CD8-positive, alpha-beta T cell (primary cell): ENCODE measurements at regions of chr7 and their contacts with region 1.

Region 1: DNA sequence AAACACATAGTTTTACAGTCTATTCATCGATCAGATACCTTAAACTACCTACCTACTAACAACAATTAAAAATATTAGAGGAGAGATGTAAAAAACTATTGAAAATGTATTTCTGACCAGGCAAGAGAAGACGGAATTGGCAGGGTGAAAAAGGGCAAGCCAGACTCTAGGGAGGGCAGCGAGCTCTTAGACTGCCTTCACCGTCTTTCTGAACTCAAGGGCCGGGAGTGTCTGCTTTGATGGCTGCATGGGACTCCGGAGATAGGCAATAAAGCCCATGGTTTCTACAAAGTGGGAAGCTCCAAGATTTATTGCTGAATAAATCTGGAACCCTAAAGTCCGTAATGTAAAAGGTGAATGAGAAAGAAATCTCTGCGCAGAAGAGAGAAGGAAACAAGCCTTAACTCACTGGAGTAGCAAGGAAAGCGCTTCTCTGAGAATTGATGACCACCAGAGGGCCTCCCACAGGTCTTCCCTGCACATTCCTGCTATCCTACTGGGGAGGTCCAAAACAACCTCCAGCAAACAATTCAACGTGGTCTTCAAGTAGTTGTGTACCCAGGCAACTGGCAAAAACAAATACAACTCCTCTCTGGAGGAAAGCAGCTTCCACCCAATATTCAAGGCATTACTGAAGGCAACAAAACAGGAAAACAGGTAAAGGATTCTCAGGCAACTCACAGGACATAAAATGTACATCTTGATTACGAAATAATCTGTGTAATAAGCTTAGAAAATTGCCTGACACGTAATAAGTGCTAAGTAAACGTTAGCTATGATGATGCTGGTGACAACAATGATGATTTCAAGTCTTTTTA is 181.3 kb downstream of the SDK1 start:
- DNase-seq: peak in 1 of 9 experiments; percentile 10
- ATAC-seq: no peak
- H3K4me3 ChIP-seq: no peak overlapping the region
- H3K4me3 Mint-ChIP-seq: no peak overlapping the region
- H3K27ac ChIP-seq: no peak overlapping the region
- H3K27ac Mint-ChIP-seq: no peak overlapping the region
- H3K4me1 ChIP-seq: no peaks in the 10 kb centered on the region
- H3K4me1 Mint-ChIP-seq: no peaks in the 10 kb centered on the region
- H3K27me3 ChIP-seq: no peaks in the 10 kb centered on the region
- H3K27me3 Mint-ChIP-seq: no peaks in the 10 kb centered on the region
- CTCF ChIP-seq: no peak

Region 2: GRCh38 chr7:3439333-3440030 is 42.9 kb before region 1 on chr7:
- CTCF ChIA-PET with region 1: no interaction called
- POLR2A ChIA-PET with region 1: no interaction called
- intact Hi-C with region 1: no loop called
- DNase-seq: no peak
- ATAC-seq: no peak
- H3K4me3 ChIP-seq: no peak overlapping the region
- H3K4me3 Mint-ChIP-seq: no peak overlapping the region
- H3K27ac ChIP-seq: no peak overlapping the region
- H3K27ac Mint-ChIP-seq: no peak overlapping the region
- H3K4me1 ChIP-seq: no peaks in the 10 kb centered on the region
- H3K4me1 Mint-ChIP-seq: no peaks in the 10 kb centered on the region
- H3K27me3 ChIP-seq: no peaks in the 10 kb centered on the region
- H3K27me3 Mint-ChIP-seq: no peaks in the 10 kb centered on the region
- CTCF ChIP-seq: no peak

Region 3: GRCh38 chr7:3461923-3462322 is 20.4 kb before region 1 on chr7:
- CTCF ChIA-PET with region 1: interaction called, 3 read pairs
- POLR2A ChIA-PET with region 1: interaction called, 3 read pairs
- intact Hi-C with region 1: loop called in 1 of 2 experiments (anchors 2 kb)
- DNase-seq: peak; percentile 28 to 89 (median 64)
- ATAC-seq: peak; percentile 85
- H3K4me3 ChIP-seq: no peak overlapping the region
- H3K4me3 Mint-ChIP-seq: peak overlapping the region; percentile 74
- H3K27ac ChIP-seq: peak overlapping the region; percentile 2 to 21
- H3K27ac Mint-ChIP-seq: peak overlapping the region; percentile 92
- H3K4me1 ChIP-seq: peaks cover 51% of the 10 kb centered on the region
- H3K4me1 Mint-ChIP-seq: peaks cover 46% of the 10 kb centered on the region
- H3K27me3 ChIP-seq: no peaks in the 10 kb centered on the region
- H3K27me3 Mint-ChIP-seq: no peaks in the 10 kb centered on the region
- CTCF ChIP-seq: no peak

Region 4: GRCh38 chr7:3730276-3730675 is 247.9 kb after region 1 on chr7:
- CTCF ChIA-PET with region 1: no interaction called
- POLR2A ChIA-PET with region 1: no interaction called
- intact Hi-C with region 1: no loop called
- DNase-seq: no peak
- ATAC-seq: no peak
- H3K4me3 ChIP-seq: no peak overlapping the region
- H3K4me3 Mint-ChIP-seq: no peak overlapping the region
- H3K27ac ChIP-seq: no peak overlapping the region
- H3K27ac Mint-ChIP-seq: no peak overlapping the region
- H3K4me1 ChIP-seq: no peaks in the 10 kb centered on the region
- H3K4me1 Mint-ChIP-seq: no peaks in the 10 kb centered on the region
- H3K27me3 ChIP-seq: no peaks in the 10 kb centered on the region
- H3K27me3 Mint-ChIP-seq: peaks cover 4% of the 10 kb centered on the region
- CTCF ChIP-seq: no peak

Region 5: DNA sequence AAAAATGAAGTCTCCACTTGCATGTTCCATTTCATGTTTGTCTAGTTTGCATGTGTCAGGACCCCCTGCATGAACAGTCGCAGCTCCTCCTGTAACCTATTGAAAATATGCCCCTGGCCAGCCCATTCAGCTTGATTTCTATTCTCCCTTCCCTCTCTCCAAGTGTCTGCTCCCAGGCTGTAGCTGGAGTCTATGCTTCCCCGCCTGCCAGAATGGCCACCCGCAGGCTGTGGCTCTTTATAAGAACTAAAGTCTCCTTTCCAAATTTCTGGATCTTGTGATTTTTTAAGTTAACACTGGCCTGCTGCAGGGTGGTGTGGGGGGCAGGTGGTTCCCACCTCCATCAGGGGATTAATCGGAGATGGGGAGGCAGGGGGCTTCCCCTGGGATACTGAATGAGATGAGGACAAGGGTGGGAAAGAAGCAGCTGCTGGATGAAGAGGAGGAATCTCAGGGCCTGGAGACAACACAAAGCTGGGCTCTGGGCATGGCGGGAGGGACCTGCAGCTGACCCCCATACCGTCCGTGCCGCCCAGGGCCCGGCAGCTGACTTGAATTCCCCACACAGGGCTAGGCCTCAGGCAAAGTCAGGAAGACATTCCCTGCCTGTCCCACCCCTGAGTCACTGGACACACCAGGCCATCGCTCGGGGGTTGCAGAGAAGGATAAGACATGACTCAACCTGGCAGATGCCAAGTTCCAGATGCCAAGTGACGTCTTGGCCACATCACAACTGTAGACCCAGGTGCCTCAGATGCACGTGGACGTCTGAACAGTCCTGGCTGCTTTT is 800.3 kb after region 1 on chr7:
- CTCF ChIA-PET with region 1: no interaction called
- POLR2A ChIA-PET with region 1: no interaction called
- intact Hi-C with region 1: no loop called
- DNase-seq: no peak
- ATAC-seq: no peak
- H3K4me3 ChIP-seq: no peak overlapping the region
- H3K4me3 Mint-ChIP-seq: no peak overlapping the region
- H3K27ac ChIP-seq: no peak overlapping the region
- H3K27ac Mint-ChIP-seq: no peak overlapping the region
- H3K4me1 ChIP-seq: no peaks in the 10 kb centered on the region
- H3K4me1 Mint-ChIP-seq: no peaks in the 10 kb centered on the region
- H3K27me3 ChIP-seq: no peaks in the 10 kb centered on the region
- H3K27me3 Mint-ChIP-seq: peaks cover 12% of the 10 kb centered on the region
- CTCF ChIP-seq: no peak